Activated CD4-positive, alpha-beta memory T cell treated with anti-CD3 and anti-CD28 coated beads for 36 hours (primary cell): ENCODE measurements at regions of chr14 and their contacts with region 1.

Region 1: GRCh38 chr14:35404449-35405303 is at the start of gene NFKBIA:
- DNase-seq: peak; percentile 96
- H3K4me3 Mint-ChIP-seq: peak within 1 kb of the TSS; percentile 98
- H3K27ac Mint-ChIP-seq: peak within 1 kb of the TSS; percentile 99
- H3K4me1 Mint-ChIP-seq: peaks cover 42% of the 10 kb centered on the region
- H3K27me3 Mint-ChIP-seq: no peaks in the 10 kb centered on the region
- total RNA-seq, gene NFKBIA: 390 to 393 TPM

Region 2: GRCh38 chr14:34539407-34540180 is 865.1 kb before region 1 on chr14 and contains the start of gene EAPP:
- CTCF ChIA-PET with region 1: no interaction called
- POLR2A ChIA-PET with region 1: no interaction called
- intact Hi-C with region 1: loop called (anchors 10 kb)
- DNase-seq: peak; percentile 98
- H3K4me3 Mint-ChIP-seq: peak within 1 kb of the TSS; percentile 99
- H3K27ac Mint-ChIP-seq: peak within 1 kb of the TSS; percentile 98
- H3K4me1 Mint-ChIP-seq: peaks cover 31% of the 10 kb centered on the region
- H3K27me3 Mint-ChIP-seq: no peaks in the 10 kb centered on the region
- total RNA-seq, gene EAPP: 37.5 to 40.2 TPM

Region 3: DNA sequence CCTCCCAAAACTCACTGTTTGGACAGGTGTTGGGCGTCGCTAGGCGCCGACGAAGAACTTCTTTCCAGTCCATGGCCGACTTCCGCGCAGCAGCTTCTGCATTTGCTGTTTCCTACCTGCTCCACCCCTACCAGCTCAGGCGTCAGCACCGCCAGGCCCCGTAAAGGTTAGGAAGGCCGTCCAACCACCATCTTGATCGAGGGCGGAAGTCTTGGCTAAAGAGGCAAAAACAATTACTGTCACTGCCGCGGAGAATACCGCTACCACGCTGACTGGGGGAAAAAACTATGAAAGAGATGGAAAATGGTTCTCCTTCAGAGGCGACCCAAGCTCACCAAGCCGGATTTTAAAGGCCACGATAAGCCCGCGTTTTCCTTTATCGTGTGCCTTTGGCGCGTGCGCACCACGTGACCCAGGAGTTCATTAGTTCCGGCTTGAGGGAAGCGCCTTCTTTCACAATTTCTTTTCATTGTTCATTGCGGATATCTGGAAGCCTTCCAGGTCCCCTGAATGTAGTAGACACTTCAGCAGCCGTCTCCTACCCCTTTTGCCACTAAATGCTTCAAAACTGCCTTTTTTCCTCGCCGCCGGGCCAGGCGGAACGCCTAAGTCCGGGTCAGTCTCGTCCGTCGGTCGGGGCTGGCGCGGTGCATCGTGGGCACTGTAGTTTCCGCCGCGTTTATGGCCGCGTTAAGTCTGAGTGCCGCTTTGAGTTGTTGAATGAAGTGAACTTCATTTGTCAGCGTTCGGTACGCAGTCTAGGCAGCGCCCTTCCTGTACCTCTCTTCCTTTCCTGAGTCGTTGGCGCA is 282.6 kb before region 1 on chr14 and contains the starts of genes PPP2R3C and PRORP:
- CTCF ChIA-PET with region 1: interaction called, 4 read pairs
- POLR2A ChIA-PET with region 1: interaction called, 47 read pairs
- intact Hi-C with region 1: loop called (anchors 1 kb)
- DNase-seq: peak; percentile 93
- H3K4me3 Mint-ChIP-seq: peak within 1 kb of the TSS; percentile 82
- H3K27ac Mint-ChIP-seq: peak within 1 kb of the TSS; percentile 99
- H3K4me1 Mint-ChIP-seq: peaks cover 55% of the 10 kb centered on the region
- H3K27me3 Mint-ChIP-seq: no peaks in the 10 kb centered on the region
- total RNA-seq, gene PPP2R3C: 48.9 to 51.8 TPM
- total RNA-seq, gene PRORP: 43.4 to 44.6 TPM

Region 4: DNA sequence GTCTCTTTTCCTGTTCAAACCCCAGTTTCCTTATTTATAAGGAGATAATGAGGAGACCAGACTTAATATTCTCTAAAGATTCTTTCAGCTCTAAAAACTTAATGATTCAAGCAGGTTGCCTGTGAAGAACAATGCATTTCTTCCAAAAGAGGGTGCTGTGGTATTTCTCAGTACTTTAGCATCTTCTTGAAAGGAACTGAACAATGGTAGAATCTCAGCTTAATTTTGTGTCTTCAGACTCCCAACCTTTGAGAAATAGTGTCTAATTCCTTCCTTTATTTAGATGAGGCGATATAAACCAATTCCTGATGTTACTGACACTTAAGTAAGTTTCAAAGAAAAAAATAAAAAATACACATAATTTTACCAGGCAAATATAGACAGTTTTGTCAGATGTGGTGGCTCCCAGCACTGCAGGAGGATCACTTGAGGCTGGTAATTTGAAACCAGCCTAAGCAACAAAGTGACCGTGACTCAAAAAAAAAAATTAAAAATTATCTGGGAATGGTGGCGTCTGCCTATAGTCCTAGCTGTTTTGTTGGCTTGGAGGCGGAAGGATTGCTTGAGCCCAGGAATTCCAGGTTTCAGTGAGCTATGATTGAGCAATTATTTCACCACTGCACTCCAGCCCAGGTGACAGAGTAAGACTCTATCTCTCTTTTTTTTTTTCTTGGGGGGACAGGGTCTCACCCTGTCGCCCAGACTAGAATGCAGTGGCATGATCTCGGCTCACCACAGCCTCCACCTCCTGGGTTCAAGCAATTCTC is 189.4 kb before region 1 on chr14:
- CTCF ChIA-PET with region 1: interaction called, 14 read pairs
- POLR2A ChIA-PET with region 1: interaction called, 4 read pairs
- intact Hi-C with region 1: loop called (anchors 1 kb)
- DNase-seq: no peak
- H3K4me3 Mint-ChIP-seq: no peak overlapping the region
- H3K27ac Mint-ChIP-seq: no peak overlapping the region
- H3K4me1 Mint-ChIP-seq: peaks cover 20% of the 10 kb centered on the region
- H3K27me3 Mint-ChIP-seq: no peaks in the 10 kb centered on the region

Region 5: GRCh38 chr14:35301735-35302528 is 102.7 kb before region 1 on chr14:
- CTCF ChIA-PET with region 1: interaction called, 12 read pairs
- POLR2A ChIA-PET with region 1: interaction called, 28 read pairs
- intact Hi-C with region 1: no loop called
- DNase-seq: no peak
- H3K4me3 Mint-ChIP-seq: peak overlapping the region; percentile 49
- H3K27ac Mint-ChIP-seq: peak overlapping the region; percentile 95
- H3K4me1 Mint-ChIP-seq: peaks cover 73% of the 10 kb centered on the region
- H3K27me3 Mint-ChIP-seq: no peaks in the 10 kb centered on the region

Region 6: GRCh38 chr14:35365130-35366055 is 39.3 kb before region 1 on chr14:
- CTCF ChIA-PET with region 1: interaction called, 9 read pairs
- POLR2A ChIA-PET with region 1: interaction called, 181 read pairs
- intact Hi-C with region 1: loop called (anchors 1 kb)
- DNase-seq: peak; percentile 94
- H3K4me3 Mint-ChIP-seq: peak overlapping the region; percentile 56
- H3K27ac Mint-ChIP-seq: peak overlapping the region; percentile 96
- H3K4me1 Mint-ChIP-seq: peaks cover 48% of the 10 kb centered on the region
- H3K27me3 Mint-ChIP-seq: no peaks in the 10 kb centered on the region